Psoas muscle (tissue), 8 donors: ENCODE measurements at regions of chrX and their contacts with region 1.

Region 1: GRCh38 chrX:147537172-147537571 is 374.5 kb upstream of the FMR1 start:
- DNase-seq: no peak
- ATAC-seq: no peak
- H3K4me3 ChIP-seq: no peak overlapping the region
- H3K27ac ChIP-seq: no peak overlapping the region
- H3K4me1 ChIP-seq: no peaks in the 10 kb centered on the region
- H3K27me3 ChIP-seq: no peaks in the 10 kb centered on the region
- CTCF ChIP-seq: no peak

Region 2: GRCh38 chrX:145856181-145856580 is 1681.0 kb before region 1 on chrX:
- intact Hi-C with region 1: loop called in 1 of 2 experiments (anchors 5 kb)
- DNase-seq: no peak
- ATAC-seq: no peak
- H3K4me3 ChIP-seq: no peak overlapping the region
- H3K27ac ChIP-seq: no peak overlapping the region
- H3K4me1 ChIP-seq: no peaks in the 10 kb centered on the region
- H3K27me3 ChIP-seq: no peaks in the 10 kb centered on the region
- CTCF ChIP-seq: no peak